Mammary epithelial cell (primary cell): ENCODE measurements at regions of chr6 and their contacts with region 1.

Region 1: GRCh38 chr6:35415065-35415991 is 36.8 kb upstream of the FANCE start:
- DNase-seq: peak; percentile 63
- H3K4me3 ChIP-seq: no peak overlapping the region
- H3K27ac ChIP-seq: no peak overlapping the region
- H3K4me1 ChIP-seq: peaks cover 7% of the 10 kb centered on the region
- H3K27me3 ChIP-seq: no peaks in the 10 kb centered on the region
- CTCF ChIP-seq: peak; percentile 70 to 74

Region 2: GRCh38 chr6:35297601-35298481 is 117.5 kb before region 1 on chr6 and contains the start of gene DEF6:
- CTCF ChIA-PET with region 1: no interaction called
- dilution Hi-C with region 1: no loop called
- in situ Hi-C with region 1: no loop called
- intact Hi-C with region 1: loop called (anchors 1 kb)
- DNase-seq: peak; percentile 90
- H3K4me3 ChIP-seq: peak within 1 kb of the TSS; percentile 66 to 85 (median 76)
- H3K27ac ChIP-seq: peak within 1 kb of the TSS; percentile 80
- H3K4me1 ChIP-seq: peaks cover 35% of the 10 kb centered on the region
- H3K27me3 ChIP-seq: no peaks in the 10 kb centered on the region
- CTCF ChIP-seq: peak; percentile 92 to 98
- total RNA-seq, gene DEF6: 12.8 to 32.9 TPM

Region 3: DNA sequence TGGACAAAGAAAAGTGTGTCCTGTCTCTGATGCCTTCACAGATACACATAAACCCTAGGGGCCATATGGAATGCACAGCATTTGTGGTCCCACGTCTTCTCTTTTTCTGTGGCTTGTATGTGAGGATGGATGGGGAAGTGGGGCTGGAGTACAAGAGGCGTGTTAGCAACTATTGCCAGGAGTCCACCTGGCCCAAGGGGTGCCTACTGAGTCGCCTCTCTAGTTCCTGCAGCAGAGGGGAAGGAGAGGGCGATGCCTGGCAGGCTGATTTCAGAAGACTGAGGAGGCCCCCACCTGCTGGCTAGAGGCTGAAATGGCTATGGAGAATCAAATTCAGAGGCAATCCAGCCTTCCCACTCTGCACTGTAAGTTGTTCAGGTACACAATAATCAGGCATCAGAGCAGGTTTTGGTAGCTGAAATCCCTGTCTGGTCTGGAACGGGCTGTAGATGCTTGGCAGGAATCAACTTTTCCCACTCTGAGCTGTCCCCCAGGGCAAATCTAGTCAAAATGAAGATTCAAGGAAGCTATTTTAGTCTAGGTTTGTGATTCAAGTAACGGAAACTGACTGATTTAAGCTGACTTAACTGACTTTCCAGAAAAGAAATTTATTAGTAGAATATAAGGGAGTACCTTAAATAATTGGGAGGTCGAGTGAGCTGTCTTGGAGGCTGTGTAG is 87.8 kb before region 1 on chr6:
- CTCF ChIA-PET with region 1: no interaction called
- dilution Hi-C with region 1: loop called (anchors 5 kb)
- in situ Hi-C with region 1: no loop called
- intact Hi-C with region 1: no loop called
- DNase-seq: peak; percentile 36
- H3K4me3 ChIP-seq: no peak overlapping the region
- H3K27ac ChIP-seq: no peak overlapping the region
- H3K4me1 ChIP-seq: no peaks in the 10 kb centered on the region
- H3K27me3 ChIP-seq: no peaks in the 10 kb centered on the region
- CTCF ChIP-seq: peak; percentile 47 to 74

Region 4: GRCh38 chr6:35370785-35371493 is 44.4 kb before region 1 on chr6:
- CTCF ChIA-PET with region 1: no interaction called
- dilution Hi-C with region 1: no loop called
- in situ Hi-C with region 1: no loop called
- intact Hi-C with region 1: no loop called
- DNase-seq: no peak
- H3K4me3 ChIP-seq: no peak overlapping the region
- H3K27ac ChIP-seq: peak overlapping the region; percentile 76
- H3K4me1 ChIP-seq: peaks cover 33% of the 10 kb centered on the region
- H3K27me3 ChIP-seq: no peaks in the 10 kb centered on the region
- CTCF ChIP-seq: no peak

Region 5: DNA sequence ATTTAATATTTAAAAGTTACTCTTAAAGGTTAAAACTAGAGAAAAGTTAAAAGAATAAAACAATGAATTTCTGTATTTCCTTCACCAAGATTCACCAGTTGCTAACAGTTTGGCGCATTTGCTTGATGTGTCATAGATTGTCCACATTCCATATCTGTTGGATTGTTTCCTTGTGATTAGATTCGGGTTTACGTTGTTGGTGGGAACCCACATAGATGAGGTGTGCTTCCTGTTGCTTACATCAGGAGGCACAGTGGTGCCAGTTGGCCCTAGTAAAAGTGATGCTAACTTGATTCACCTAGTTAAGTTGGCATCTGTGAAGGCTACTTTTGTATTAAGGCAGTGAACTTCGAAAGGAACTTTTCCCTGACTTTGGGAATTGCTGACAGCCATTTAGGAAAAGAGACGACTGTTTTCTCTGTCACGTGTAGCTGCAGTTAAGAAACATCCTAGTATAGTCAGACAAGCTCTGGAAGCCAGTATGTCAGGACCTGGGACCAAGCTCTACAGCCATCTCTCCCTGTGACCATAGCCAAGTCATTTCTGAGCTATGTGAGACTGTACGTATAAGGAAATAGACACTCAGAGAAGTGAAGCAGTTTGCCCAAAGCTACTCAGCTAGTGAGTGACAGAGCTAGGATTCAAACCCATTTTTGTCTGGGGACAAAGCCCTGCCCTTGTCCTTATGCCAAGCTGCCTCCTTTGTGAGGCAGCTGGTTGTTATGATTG is 23.9 kb before region 1 on chr6:
- CTCF ChIA-PET with region 1: interaction called, 12 read pairs
- dilution Hi-C with region 1: no loop called
- in situ Hi-C with region 1: no loop called
- intact Hi-C with region 1: loop called (anchors 1 kb)
- DNase-seq: peak; percentile 97
- H3K4me3 ChIP-seq: no peak overlapping the region
- H3K27ac ChIP-seq: peak overlapping the region; percentile 96
- H3K4me1 ChIP-seq: peaks cover 51% of the 10 kb centered on the region
- H3K27me3 ChIP-seq: no peaks in the 10 kb centered on the region
- CTCF ChIP-seq: peak; percentile 4 to 50

Region 6: DNA sequence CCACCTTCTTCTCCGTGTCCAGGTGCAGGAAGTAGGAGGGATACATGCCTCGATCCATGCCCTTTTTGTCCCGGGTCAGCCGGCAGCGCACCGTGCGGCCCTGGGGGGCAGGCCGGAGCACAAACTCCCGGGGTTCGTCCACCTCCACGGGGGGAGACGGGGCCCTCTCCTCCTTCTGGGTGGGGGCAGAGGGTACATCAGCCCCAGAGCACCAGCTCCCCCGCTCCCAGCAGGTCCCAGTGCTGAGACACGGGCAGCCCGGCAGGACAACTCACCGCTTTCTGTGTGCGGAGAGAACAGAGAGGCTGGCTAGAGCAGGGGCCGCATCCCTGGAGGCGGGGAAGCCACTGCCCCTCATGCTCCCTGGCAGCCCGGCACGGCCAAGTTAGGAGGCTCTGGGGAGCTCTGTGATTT is 90.7 kb after region 1 on chr6:
- CTCF ChIA-PET with region 1: no interaction called
- dilution Hi-C with region 1: loop called (anchors 5 kb)
- in situ Hi-C with region 1: no loop called
- intact Hi-C with region 1: no loop called
- DNase-seq: no peak
- H3K4me3 ChIP-seq: no peak overlapping the region
- H3K27ac ChIP-seq: no peak overlapping the region
- H3K4me1 ChIP-seq: peaks cover 5% of the 10 kb centered on the region
- H3K27me3 ChIP-seq: no peaks in the 10 kb centered on the region
- CTCF ChIP-seq: no peak

Region 7: GRCh38 chr6:35562053-35562452 is 146.7 kb after region 1 on chr6:
- CTCF ChIA-PET with region 1: no interaction called
- dilution Hi-C with region 1: no loop called
- in situ Hi-C with region 1: no loop called
- intact Hi-C with region 1: no loop called
- DNase-seq: no peak
- H3K4me3 ChIP-seq: no peak overlapping the region
- H3K27ac ChIP-seq: no peak overlapping the region
- H3K4me1 ChIP-seq: no peaks in the 10 kb centered on the region
- H3K27me3 ChIP-seq: no peaks in the 10 kb centered on the region
- CTCF ChIP-seq: no peak